ENCODE measurements at regions of chr1 and their contacts with region 1.

Region 1: DNA sequence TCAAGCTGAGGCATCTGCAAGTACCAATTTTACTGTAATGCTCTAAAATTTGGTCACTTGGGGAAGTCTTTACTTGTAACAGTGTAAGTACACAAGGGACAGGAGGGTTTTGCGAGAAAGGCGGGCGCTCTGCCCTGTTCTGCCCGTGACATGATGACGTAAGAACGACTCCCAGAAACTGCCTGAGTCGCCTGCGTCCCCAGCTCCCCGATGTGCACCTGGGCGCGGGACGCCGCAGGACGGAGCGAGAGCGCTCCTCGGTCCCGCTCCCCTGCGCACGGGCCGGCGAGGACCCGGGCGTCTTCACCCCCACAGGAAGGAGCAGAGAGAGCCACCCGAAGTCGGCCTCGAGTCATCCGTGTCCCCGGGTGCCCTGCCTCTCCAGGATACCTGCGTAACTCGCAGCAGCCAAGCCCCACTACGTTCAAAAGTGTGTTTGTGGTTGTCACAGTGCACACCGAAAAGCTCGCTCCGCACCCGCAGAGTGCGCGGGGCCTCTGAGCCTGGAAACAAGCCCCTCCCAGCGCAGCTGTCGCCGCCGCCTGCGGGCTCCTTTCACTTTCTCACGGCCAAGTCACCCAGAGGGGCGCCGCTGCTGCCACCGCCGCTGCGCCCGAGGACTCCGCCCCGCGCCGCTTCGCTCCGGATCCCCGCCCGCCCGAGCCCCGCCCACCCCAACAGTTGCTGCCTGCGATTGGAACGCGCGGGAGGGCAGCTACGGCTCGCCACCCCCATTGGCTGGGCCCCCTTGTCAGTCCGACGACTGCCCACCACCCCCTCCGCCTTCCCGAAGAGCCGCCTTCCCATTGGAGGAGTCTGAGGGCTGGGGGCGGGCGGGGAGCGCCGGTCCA is 3.2 kb upstream of the ZBTB18 start:
- DNase-seq: peak in 13 of 14 experiments; percentile 94 to 99 (median 97)
- ATAC-seq: peak; percentile 71
- H3K4me3 ChIP-seq: peak overlapping the region; percentile 96
- H3K4me3 Mint-ChIP-seq: peak overlapping the region; percentile 91
- H3K27ac ChIP-seq: peak overlapping the region; percentile 96 to 98
- H3K27ac Mint-ChIP-seq: peak overlapping the region; percentile 98
- H3K4me1 ChIP-seq: peaks cover 17% of the 10 kb centered on the region
- H3K4me1 Mint-ChIP-seq: peaks cover 29% of the 10 kb centered on the region
- H3K27me3 ChIP-seq: no peaks in the 10 kb centered on the region
- H3K27me3 Mint-ChIP-seq: no peaks in the 10 kb centered on the region
- CTCF ChIP-seq: no peak

Region 2: GRCh38 chr1:243343970-243344937 is 703.6 kb before region 1 on chr1:
- CTCF ChIA-PET with region 1: no interaction called
- POLR2A ChIA-PET with region 1: no interaction called
- intact Hi-C with region 1: loop called in 1 of 2 experiments (anchors 10 kb)
- DNase-seq: peak in 3 of 14 experiments; percentile 56 to 68 (median 64)
- ATAC-seq: peak; percentile 46
- H3K4me3 ChIP-seq: no peak overlapping the region
- H3K4me3 Mint-ChIP-seq: no peak overlapping the region
- H3K27ac ChIP-seq: no peak overlapping the region
- H3K27ac Mint-ChIP-seq: no peak overlapping the region
- H3K4me1 ChIP-seq: no peaks in the 10 kb centered on the region
- H3K4me1 Mint-ChIP-seq: peaks cover 4% of the 10 kb centered on the region
- H3K27me3 ChIP-seq: no peaks in the 10 kb centered on the region
- H3K27me3 Mint-ChIP-seq: no peaks in the 10 kb centered on the region
- CTCF ChIP-seq: peak; percentile 90

Region 3: GRCh38 chr1:243667591-243667990 is 380.3 kb before region 1 on chr1:
- CTCF ChIA-PET with region 1: no interaction called
- POLR2A ChIA-PET with region 1: no interaction called
- intact Hi-C with region 1: no loop called
- DNase-seq: no peak
- ATAC-seq: no peak
- H3K4me3 ChIP-seq: no peak overlapping the region
- H3K4me3 Mint-ChIP-seq: no peak overlapping the region
- H3K27ac ChIP-seq: no peak overlapping the region
- H3K27ac Mint-ChIP-seq: peak overlapping the region; percentile 8
- H3K4me1 ChIP-seq: no peaks in the 10 kb centered on the region
- H3K4me1 Mint-ChIP-seq: peaks cover 7% of the 10 kb centered on the region
- H3K27me3 ChIP-seq: no peaks in the 10 kb centered on the region
- H3K27me3 Mint-ChIP-seq: no peaks in the 10 kb centered on the region
- CTCF ChIP-seq: no peak

Region 4: GRCh38 chr1:243903895-243904294 is 144.0 kb before region 1 on chr1:
- CTCF ChIA-PET with region 1: no interaction called
- POLR2A ChIA-PET with region 1: no interaction called
- intact Hi-C with region 1: no loop called
- DNase-seq: no peak
- ATAC-seq: no peak
- H3K4me3 ChIP-seq: no peak overlapping the region
- H3K4me3 Mint-ChIP-seq: no peak overlapping the region
- H3K27ac ChIP-seq: no peak overlapping the region
- H3K27ac Mint-ChIP-seq: no peak overlapping the region
- H3K4me1 ChIP-seq: no peaks in the 10 kb centered on the region
- H3K4me1 Mint-ChIP-seq: no peaks in the 10 kb centered on the region
- H3K27me3 ChIP-seq: no peaks in the 10 kb centered on the region
- H3K27me3 Mint-ChIP-seq: peaks cover 27% of the 10 kb centered on the region
- CTCF ChIP-seq: no peak

Region 5: GRCh38 chr1:244035358-244035757 is 12.5 kb before region 1 on chr1:
- CTCF ChIA-PET with region 1: no interaction called
- POLR2A ChIA-PET with region 1: interaction called, 14 read pairs
- intact Hi-C with region 1: no loop called
- DNase-seq: no peak
- ATAC-seq: no peak
- H3K4me3 ChIP-seq: no peak overlapping the region
- H3K4me3 Mint-ChIP-seq: no peak overlapping the region
- H3K27ac ChIP-seq: no peak overlapping the region
- H3K27ac Mint-ChIP-seq: no peak overlapping the region
- H3K4me1 ChIP-seq: no peaks in the 10 kb centered on the region
- H3K4me1 Mint-ChIP-seq: no peaks in the 10 kb centered on the region
- H3K27me3 ChIP-seq: no peaks in the 10 kb centered on the region
- H3K27me3 Mint-ChIP-seq: peaks cover 14% of the 10 kb centered on the region
- CTCF ChIP-seq: no peak

Region 6: DNA sequence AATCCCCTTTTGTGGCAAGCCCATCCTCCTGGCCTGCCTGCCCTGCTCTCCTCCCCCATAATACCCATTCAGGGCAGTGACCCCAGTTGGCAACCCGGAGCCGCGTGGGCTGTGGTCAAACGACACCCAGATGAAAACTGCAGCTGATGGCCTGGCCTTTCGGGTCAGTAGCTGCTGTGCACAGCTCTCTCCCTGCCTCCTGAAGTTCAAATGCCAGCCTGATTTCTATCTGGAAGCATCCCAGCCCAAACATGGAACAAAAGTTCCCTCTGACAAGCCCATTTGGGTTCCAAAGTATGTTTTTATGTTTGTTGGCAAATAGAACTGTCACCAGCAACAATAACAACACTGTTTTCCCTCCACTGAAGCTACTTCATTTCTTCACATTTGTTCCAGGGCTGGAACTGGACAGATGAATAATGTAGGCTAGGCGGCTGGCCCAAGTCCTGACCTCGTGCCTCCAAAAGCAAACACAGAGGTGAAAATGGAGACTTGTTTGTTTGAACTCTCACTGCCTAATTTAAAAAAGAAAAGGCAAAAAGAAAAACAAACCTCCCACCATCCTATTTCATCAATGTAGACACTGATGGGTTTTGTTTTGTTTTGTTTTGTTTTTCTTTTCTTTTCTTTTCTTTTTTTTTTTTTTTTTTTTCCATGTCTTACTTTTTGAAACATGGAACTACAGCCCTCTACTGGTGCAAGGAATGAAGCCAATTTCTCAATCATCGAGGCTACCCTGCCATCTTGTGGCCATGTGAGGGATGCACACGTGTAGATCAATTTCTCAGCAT is 224.8 kb after region 1 on chr1:
- CTCF ChIA-PET with region 1: no interaction called
- POLR2A ChIA-PET with region 1: interaction called, 6 read pairs
- intact Hi-C with region 1: loop called in 1 of 2 experiments (anchors 5 kb)
- DNase-seq: peak; percentile 58 to 89 (median 63)
- ATAC-seq: peak; percentile 96
- H3K4me3 ChIP-seq: no peak overlapping the region
- H3K4me3 Mint-ChIP-seq: no peak overlapping the region
- H3K27ac ChIP-seq: no peak overlapping the region
- H3K27ac Mint-ChIP-seq: no peak overlapping the region
- H3K4me1 ChIP-seq: no peaks in the 10 kb centered on the region
- H3K4me1 Mint-ChIP-seq: peaks cover 14% of the 10 kb centered on the region
- H3K27me3 ChIP-seq: no peaks in the 10 kb centered on the region
- H3K27me3 Mint-ChIP-seq: no peaks in the 10 kb centered on the region
- CTCF ChIP-seq: peak; percentile 99

Region 7: GRCh38 chr1:244291236-244292201 is 243.7 kb after region 1 on chr1:
- CTCF ChIA-PET with region 1: no interaction called
- POLR2A ChIA-PET with region 1: no interaction called
- intact Hi-C with region 1: no loop called
- DNase-seq: no peak
- ATAC-seq: no peak
- H3K4me3 ChIP-seq: no peak overlapping the region
- H3K4me3 Mint-ChIP-seq: no peak overlapping the region
- H3K27ac ChIP-seq: no peak overlapping the region
- H3K27ac Mint-ChIP-seq: no peak overlapping the region
- H3K4me1 ChIP-seq: no peaks in the 10 kb centered on the region
- H3K4me1 Mint-ChIP-seq: peaks cover 4% of the 10 kb centered on the region
- H3K27me3 ChIP-seq: no peaks in the 10 kb centered on the region
- H3K27me3 Mint-ChIP-seq: no peaks in the 10 kb centered on the region
- CTCF ChIP-seq: no peak

Region 8: GRCh38 chr1:244652699-244653466 is 605.0 kb after region 1 on chr1 and contains the start of gene DESI2:
- CTCF ChIA-PET with region 1: no interaction called
- POLR2A ChIA-PET with region 1: no interaction called
- intact Hi-C with region 1: loop called in 1 of 2 experiments (anchors 10 kb)
- DNase-seq: peak; percentile 95 to 100 (median 97)
- ATAC-seq: peak; percentile 92
- H3K4me3 ChIP-seq: peak within 1 kb of the TSS; percentile 80
- H3K4me3 Mint-ChIP-seq: peak within 1 kb of the TSS; percentile 88
- H3K27ac ChIP-seq: peak within 1 kb of the TSS; percentile 53 to 74
- H3K27ac Mint-ChIP-seq: peak within 1 kb of the TSS; percentile 83
- H3K4me1 ChIP-seq: peaks cover 23% of the 10 kb centered on the region
- H3K4me1 Mint-ChIP-seq: peaks cover 21% of the 10 kb centered on the region
- H3K27me3 ChIP-seq: no peaks in the 10 kb centered on the region
- H3K27me3 Mint-ChIP-seq: no peaks in the 10 kb centered on the region
- CTCF ChIP-seq: peak; percentile 46
- total RNA-seq, gene DESI2: 12.9 to 13.7 TPM